ENCODE measurements at regions of chr10 and their contacts with region 1.

Region 1: DNA sequence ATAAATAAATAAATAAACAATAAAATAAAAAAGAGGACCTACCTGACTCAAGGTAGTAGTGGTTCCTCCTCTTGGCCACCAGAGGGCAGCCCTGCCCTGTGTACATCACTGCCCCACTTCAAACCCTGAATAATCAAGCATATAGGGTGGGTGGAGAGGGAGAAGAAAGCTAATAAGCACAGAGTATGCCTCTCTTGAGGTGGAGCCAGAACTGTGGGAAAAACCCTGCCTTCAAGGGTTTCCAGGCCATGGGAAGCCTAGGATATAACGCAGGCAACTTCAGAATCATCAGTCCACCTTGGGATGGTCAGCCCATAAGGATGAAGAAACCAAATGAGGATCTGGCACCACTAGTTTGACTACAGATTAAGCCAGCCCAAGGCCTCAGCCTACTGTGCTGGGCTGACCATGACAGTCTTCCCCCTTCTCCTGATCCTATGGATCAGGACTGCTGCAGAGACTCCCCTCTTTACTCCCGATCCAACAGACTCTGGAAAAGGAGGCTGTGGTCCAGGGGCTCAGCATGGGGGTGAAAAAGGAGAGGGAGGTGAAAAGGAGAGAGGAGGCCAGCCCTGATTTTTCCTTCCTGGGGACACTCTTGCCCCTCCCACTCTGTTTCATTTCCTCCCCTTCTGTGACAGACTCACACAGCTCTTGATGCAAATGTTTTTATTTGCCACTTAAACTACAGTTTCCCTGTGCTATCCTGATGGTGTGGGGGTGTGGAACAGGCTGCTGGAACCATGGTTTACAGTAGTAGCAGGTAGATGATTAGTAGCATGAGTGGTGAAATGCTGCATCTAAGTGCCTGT is 10.1 kb downstream of the AVPI1 start:
- DNase-seq: no peak
- H3K4me3 ChIP-seq: no peak overlapping the region
- H3K27ac ChIP-seq: peak overlapping the region in 1 of 2 donors; percentile 55
- H3K4me1 ChIP-seq: peaks cover 0 to 3% of the 10 kb centered on the region in 2 donors
- H3K27me3 ChIP-seq: no peaks in the 10 kb centered on the region
- CTCF ChIP-seq: peak; percentile 80 to 93 (median 91)

Region 2: DNA sequence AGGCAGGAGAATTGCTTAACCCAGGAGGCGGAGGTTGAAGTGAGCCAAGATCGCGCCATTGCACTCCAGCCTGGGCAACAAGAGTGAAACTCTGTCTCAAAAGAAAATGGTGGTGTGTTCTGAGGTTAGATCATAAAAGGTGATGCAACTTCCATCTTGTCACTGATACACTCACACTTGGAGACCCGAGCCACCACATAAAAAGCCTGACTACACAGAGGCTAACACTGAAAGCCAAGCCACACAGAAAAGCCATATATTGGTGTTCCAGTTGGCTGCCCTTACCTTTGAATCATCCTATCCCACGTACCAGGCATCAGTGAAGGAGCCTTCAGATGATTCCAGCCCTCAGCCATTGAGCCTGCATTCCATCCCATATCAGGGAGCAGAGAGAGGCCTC is 47.7 kb before region 1 on chr10:
- intact Hi-C with region 1: no loop called
- DNase-seq: no peak
- H3K4me3 ChIP-seq: no peak overlapping the region
- H3K27ac ChIP-seq: no peak overlapping the region
- H3K4me1 ChIP-seq: peaks cover 0 to 3% of the 10 kb centered on the region in 2 donors
- H3K27me3 ChIP-seq: no peaks in the 10 kb centered on the region
- CTCF ChIP-seq: no peak

Region 3: DNA sequence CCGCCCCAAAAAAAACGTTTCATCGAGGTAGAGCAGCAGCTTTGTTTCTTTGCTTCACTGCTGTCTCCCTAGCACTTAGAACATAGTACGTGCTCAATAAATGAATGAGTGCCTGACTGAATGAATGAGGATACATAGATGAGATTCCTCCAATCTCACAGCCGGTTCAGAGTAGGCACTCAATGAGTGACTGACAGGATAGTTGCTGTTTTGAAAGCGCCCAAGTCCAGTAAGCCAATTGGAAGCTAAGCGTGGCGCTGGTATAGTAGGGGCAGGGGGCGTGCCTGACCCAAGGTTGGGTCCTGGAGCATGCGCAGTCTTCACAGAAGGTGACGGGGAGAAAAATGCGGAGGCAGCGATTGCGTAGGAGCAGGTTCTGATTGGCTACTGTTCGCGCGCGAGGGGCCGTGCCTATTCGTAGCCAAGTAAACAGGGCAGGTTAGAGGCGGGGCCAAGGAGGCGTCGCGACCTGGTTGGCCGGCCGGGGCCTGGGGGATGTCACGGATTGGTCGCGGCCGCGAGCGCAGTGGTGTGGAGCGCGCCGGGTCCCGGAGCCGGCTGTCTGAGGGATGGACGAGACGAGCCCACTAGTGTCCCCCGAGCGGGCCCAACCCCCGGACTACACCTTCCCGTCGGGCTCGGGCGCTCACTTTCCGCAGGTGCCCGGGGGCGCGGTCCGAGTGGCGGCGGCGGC is 36.7 kb before region 1 on chr10 and contains the start of gene PI4K2A:
- intact Hi-C with region 1: no loop called
- DNase-seq: peak; percentile 97 to 99
- H3K4me3 ChIP-seq: peak within 1 kb of the TSS; percentile 87 to 96
- H3K27ac ChIP-seq: peak within 1 kb of the TSS; percentile 80 to 93
- H3K4me1 ChIP-seq: peaks cover 0 to 13% of the 10 kb centered on the region in 2 donors
- H3K27me3 ChIP-seq: no peaks in the 10 kb centered on the region
- CTCF ChIP-seq: no peak
- total RNA-seq, gene PI4K2A: 33.7 TPM

Region 4: DNA sequence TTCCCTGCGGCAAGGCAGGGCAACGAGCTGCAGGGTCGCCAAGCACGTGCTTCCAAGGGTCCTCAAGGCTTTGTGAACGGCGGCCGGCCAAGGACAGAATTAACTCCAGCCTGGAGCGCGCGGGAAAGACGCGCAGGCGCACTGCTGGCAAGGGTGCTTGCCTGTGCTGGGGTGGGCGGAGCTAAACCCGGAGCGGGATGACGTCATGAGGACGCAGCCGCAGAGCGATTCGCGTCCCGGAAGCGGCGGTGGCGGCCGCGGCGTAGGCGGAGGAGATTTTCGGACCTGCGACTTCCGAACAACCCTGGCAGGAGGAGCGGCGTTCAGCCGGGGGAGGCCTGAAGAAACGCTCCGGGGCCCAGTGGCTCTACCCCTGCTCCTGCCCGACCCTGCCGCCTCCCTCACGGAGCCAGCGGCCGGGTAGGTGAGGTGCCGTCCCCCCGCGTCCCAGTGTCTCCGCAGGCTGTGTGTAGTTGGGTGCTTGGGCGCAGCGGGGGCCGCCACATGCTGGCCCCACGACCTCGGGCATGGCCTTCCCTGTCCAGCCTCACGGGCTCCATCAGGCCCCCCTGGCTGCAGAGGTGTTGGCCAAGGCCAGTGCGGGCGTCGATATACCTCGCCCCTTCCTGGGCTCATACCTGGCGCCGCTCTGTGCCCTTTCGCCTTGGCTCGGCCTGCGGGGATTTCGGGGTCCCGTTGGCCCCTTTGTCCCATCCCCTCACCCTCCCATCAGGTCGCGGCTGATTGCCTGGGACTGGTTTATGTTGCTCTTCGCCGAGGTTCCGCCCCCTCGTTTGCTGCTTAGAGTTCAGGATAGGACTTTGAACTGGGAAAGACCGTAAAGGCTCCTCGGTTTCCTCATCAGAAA is 60.2 kb after region 1 on chr10 and contains the start of gene ZFYVE27:
- intact Hi-C with region 1: loop called (anchors 2 kb)
- DNase-seq: peak; percentile 79 to 97
- H3K4me3 ChIP-seq: peak within 1 kb of the TSS; percentile 100
- H3K27ac ChIP-seq: peak within 1 kb of the TSS; percentile 97
- H3K4me1 ChIP-seq: peaks cover 2 to 20% of the 10 kb centered on the region in 2 donors
- H3K27me3 ChIP-seq: no peaks in the 10 kb centered on the region
- CTCF ChIP-seq: no peak
- total RNA-seq, gene ZFYVE27: 62.2 TPM

Measured in ascending aorta (tissue), 2 donors.